ENCODE measurements at regions of chr12 and their contacts with region 1.

Region 1: DNA sequence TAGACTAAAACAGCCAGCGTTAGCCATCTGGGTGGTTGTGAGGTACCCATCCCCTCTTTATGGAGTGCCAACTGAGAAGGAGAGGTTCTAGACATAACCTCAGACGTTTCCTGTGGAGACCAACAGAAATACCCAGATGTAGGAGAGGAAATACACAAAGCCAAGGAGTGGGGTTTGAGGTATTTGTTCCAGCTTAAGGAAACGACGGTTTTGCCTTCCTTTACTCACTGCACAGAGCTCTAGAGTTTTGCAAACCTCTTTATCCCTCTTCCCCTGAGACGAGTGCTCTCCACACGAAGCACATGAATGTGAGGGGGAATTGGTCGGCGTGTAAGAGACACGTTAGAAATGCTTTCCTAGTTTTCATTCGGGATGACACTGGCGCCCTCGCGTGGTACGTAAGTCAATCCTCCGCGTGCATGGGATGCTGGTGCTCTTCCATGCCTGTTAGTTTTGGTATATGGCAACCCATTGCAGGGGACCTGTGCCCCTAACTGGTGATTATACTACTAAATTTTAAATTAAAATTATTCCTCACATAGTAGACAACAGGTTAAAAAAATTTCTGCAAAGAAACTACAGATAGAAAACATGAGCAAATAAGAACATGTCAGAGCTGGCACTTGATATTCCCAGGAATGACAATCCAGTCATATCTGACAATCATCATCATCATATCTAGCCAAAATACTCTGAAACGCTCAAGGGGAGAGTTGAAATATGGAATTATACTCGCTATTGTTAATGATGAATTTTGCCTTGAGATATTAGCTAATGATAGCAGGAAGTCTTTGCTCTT is 121.7 kb downstream of the PPM1H start:
- DNase-seq: peak; percentile 76
- H3K4me3 Mint-ChIP-seq: no peak overlapping the region
- H3K27ac Mint-ChIP-seq: no peak overlapping the region
- H3K4me1 Mint-ChIP-seq: peaks cover 7% of the 10 kb centered on the region
- H3K27me3 Mint-ChIP-seq: no peaks in the 10 kb centered on the region
- CTCF ChIP-seq: peak; percentile 50

Region 2: GRCh38 chr12:62575036-62575435 is 238.2 kb before region 1 on chr12:
- CTCF ChIA-PET with region 1: interaction called, 10 read pairs
- POLR2A ChIA-PET with region 1: no interaction called
- intact Hi-C with region 1: no loop called
- DNase-seq: no peak
- H3K4me3 Mint-ChIP-seq: no peak overlapping the region
- H3K27ac Mint-ChIP-seq: no peak overlapping the region
- H3K4me1 Mint-ChIP-seq: no peaks in the 10 kb centered on the region
- H3K27me3 Mint-ChIP-seq: no peaks in the 10 kb centered on the region
- CTCF ChIP-seq: no peak

Region 3: DNA sequence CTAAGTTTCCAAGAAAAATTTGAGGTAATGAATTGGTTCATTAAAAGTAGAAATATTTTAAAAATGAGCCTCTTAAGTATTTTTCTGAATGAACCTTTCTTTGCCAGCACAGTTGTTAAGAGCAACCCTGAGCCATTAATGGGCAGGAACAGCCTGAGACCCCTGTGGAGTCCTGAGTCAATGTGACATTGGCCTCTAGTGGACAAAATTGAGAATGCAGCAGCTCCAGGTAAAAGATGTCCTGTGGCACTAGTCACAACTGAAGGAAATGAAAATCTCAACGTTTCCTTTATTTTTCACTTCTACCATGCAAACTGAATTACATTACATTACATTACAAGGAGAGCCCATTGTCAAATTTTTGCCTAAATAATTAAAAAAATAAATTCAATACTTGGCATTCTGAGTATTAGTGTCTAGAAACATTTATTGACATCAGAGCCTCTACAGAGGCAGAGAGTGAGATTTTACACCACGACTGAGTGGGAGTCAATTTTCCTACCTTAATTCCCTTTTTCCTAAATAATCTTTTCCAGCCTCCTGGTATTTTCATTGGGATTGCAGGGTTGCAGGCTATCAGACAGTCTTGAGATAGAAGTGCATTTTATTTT is 14.0 kb before region 1 on chr12:
- CTCF ChIA-PET with region 1: interaction called, 90 read pairs
- POLR2A ChIA-PET with region 1: no interaction called
- intact Hi-C with region 1: no loop called
- DNase-seq: peak; percentile 74
- H3K4me3 Mint-ChIP-seq: no peak overlapping the region
- H3K27ac Mint-ChIP-seq: no peak overlapping the region
- H3K4me1 Mint-ChIP-seq: no peaks in the 10 kb centered on the region
- H3K27me3 Mint-ChIP-seq: no peaks in the 10 kb centered on the region
- CTCF ChIP-seq: peak; percentile 86

Region 4: GRCh38 chr12:62843716-62844115 is 30.5 kb after region 1 on chr12:
- CTCF ChIA-PET with region 1: interaction called, 11 read pairs
- POLR2A ChIA-PET with region 1: no interaction called
- intact Hi-C with region 1: no loop called
- DNase-seq: no peak
- H3K4me3 Mint-ChIP-seq: no peak overlapping the region
- H3K27ac Mint-ChIP-seq: no peak overlapping the region
- H3K4me1 Mint-ChIP-seq: peaks cover 16% of the 10 kb centered on the region
- H3K27me3 Mint-ChIP-seq: no peaks in the 10 kb centered on the region
- CTCF ChIP-seq: no peak

Region 5: GRCh38 chr12:63068857-63069442 is 255.7 kb after region 1 on chr12:
- CTCF ChIA-PET with region 1: interaction called, 68 read pairs
- POLR2A ChIA-PET with region 1: no interaction called
- intact Hi-C with region 1: loop called (anchors 1 kb)
- DNase-seq: peak; percentile 72
- H3K4me3 Mint-ChIP-seq: no peak overlapping the region
- H3K27ac Mint-ChIP-seq: no peak overlapping the region
- H3K4me1 Mint-ChIP-seq: no peaks in the 10 kb centered on the region
- H3K27me3 Mint-ChIP-seq: no peaks in the 10 kb centered on the region
- CTCF ChIP-seq: peak; percentile 55

Measured in MCF 10A (cell line).